Activated naive CD4-positive, alpha-beta T cell treated with anti-CD3 and anti-CD28 coated beads for 36 hours (primary cell): ENCODE measurements at regions of chr3 and their contacts with region 1.

Region 1: DNA sequence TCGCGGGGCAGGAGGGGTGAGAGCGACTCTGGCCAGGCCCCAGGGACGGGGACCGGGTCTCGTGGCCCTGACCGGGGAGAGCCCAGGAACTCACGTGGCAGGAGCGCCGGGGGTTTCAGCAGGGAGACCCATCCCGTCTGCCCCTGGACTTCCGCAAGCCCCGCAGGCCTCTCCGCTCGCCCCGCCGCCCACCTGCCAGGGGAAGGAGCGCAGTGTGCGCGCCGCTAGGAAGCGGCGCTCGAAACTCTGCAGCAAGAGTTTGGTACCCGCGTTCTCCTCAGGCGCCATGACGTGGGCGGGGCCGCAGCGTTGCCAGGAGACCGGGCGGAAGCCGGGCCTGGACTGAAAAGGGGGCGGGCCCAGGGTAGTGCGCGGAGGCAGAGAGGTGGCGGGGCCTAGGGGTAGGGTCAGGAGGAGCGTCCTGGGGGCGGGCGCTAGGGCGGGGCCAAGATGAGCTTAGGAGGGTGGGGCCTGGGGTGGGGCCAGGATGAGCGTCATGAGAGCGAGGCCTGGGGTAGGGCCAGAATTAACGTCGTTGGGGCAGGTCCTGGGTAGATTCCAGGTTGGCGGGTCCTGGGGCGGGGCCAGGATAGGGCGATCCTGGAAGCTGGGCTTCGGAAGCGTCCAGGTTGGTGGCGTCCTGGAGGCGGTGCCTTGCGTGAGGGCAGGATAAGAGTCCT is 29.7 kb downstream of the ALG1L2 start:
- DNase-seq: peak; percentile 99
- H3K4me3 Mint-ChIP-seq: peak overlapping the region; percentile 92
- H3K27ac Mint-ChIP-seq: peak overlapping the region; percentile 95
- H3K4me1 Mint-ChIP-seq: peaks cover 18% of the 10 kb centered on the region
- H3K27me3 Mint-ChIP-seq: no peaks in the 10 kb centered on the region

Region 2: DNA sequence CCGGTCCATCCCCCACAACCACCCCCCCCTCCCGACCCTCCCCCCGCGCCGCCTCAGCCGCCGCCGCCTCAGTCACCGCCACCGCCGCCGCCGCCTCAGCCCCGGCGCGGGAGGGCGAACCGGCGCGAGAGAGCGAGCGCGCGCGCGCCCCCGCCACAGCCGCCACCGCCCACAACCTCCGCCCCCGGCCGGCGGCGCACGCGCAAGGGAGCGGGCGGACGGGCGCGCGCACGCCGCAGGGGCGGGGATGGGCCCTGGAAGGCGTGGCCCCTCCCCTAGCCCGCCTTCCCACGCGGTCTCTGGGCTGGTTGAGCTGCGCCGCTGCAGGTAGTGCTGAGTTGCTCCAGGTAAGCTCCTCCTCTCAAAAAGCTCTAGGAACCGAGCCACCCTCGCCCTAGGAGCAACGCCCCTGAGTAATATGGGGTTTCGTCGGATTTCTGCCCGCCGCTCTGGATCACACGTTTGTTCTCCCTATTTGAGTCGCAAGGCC is 217.7 kb before region 1 on chr3 and contains the start of gene TMCC1:
- CTCF ChIA-PET with region 1: no interaction called
- intact Hi-C with region 1: loop called (anchors 1 kb)
- DNase-seq: peak; percentile 87
- H3K4me3 Mint-ChIP-seq: peak within 1 kb of the TSS; percentile 92
- H3K27ac Mint-ChIP-seq: peak within 1 kb of the TSS; percentile 70
- H3K4me1 Mint-ChIP-seq: peaks cover 38% of the 10 kb centered on the region
- H3K27me3 Mint-ChIP-seq: no peaks in the 10 kb centered on the region
- total RNA-seq, gene TMCC1: 13.6 to 14.3 TPM

Region 3: GRCh38 chr3:130014526-130014925 is 96.8 kb before region 1 on chr3:
- CTCF ChIA-PET with region 1: no interaction called
- intact Hi-C with region 1: loop called (anchors 5 kb)
- DNase-seq: no peak
- H3K4me3 Mint-ChIP-seq: no peak overlapping the region
- H3K27ac Mint-ChIP-seq: no peak overlapping the region
- H3K4me1 Mint-ChIP-seq: no peaks in the 10 kb centered on the region
- H3K27me3 Mint-ChIP-seq: no peaks in the 10 kb centered on the region

Region 4: DNA sequence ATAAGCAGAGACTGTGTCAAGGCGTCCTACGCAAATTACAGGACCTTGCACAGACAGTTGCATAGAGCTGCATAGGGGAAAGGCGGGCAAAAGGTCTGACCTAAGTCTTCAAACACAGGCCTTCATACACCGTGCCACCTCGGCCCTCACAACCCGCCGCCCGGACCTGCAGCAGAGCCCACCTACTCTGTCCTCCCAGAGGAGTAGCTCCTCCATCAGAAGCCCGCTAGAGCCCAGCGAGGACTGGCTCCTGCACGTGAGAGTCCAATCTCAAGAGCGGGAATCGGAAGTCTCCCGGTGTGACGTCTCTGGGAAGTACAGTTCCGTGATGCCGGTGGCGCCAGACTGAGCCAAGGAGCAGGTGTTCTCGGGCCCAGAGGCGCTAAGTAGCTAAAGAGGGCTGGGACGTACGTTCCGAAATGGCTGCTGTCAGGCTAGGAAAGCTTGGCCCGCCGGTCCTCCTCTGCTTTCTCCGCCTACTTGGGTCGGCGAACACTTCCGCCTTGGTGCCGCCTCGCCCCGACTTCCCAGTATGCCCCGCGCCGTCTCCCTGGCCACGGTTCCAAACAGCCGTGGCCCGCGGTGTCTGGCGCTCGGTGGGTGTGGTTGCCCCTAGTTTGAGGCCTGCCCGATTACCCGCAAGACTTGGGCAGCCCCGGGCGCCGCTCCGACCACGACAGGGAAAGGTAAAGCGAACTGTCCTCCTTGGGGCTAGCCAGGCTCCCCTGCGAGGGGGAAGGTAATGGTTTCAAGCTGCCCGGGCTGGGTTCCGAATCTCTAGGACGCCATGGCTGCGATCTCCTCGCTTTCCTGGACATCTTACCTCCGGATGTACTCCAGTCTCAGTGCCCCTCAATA is 915.2 kb after region 1 on chr3 and contains the starts of genes ASTE1 and NEK11:
- CTCF ChIA-PET with region 1: no interaction called
- intact Hi-C with region 1: loop called (anchors 5 kb)
- DNase-seq: peak; percentile 92
- H3K4me3 Mint-ChIP-seq: peak within 1 kb of the TSS; percentile 92
- H3K27ac Mint-ChIP-seq: peak within 1 kb of the TSS; percentile 94
- H3K4me1 Mint-ChIP-seq: peaks cover 42% of the 10 kb centered on the region
- H3K27me3 Mint-ChIP-seq: no peaks in the 10 kb centered on the region
- total RNA-seq, gene ASTE1: 10.8 to 11.2 TPM
- total RNA-seq, gene NEK11: 1.1 to 1.9 TPM